ENCODE measurements at regions of chr12 and their contacts with region 1.

Region 1: DNA sequence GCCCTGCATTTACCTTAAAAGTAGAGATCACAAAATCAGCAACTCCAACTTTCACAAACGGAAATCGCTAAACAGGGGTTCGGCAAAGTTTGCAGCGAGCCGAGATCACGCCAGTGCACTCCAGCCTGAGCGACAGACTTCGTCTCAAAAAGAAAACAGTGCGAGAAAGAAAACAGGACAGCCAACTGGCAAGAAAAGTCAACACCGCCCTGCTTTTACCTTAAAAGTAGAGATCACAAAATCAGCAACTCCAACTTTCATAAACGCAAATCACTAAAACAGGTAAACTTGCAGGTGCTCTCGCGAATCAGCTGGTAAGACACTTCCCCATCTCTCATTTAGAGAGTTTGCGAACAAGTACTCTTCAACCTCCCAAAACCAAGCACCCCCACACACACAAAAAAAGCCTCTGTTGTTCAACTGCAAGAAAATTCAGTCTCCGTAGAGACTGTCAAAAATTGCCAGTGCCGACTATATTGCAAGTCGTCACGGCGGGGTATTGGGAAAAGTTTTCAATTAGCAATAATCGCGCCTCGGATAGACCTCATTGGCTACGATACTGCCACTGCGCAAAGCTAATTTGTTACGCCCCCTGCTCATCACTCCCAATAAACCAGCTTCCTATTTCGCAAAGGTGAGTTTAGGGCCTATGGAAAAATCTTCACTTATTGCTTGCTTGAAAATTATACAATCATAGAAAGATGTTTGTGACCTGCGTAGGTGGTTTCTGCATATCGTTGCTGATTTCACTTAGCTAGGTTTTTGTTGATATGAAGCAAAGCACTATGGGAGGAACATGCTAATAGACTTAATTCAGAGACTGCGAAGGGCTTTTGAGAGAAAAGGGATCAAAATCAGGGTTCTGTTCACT is at the start of gene RNU4-1:
- DNase-seq: peak; percentile 99
- ATAC-seq: peak; percentile 60
- H3K4me3 ChIP-seq: peak within 1 kb of the TSS; percentile 47 to 56
- H3K27ac ChIP-seq: peak within 1 kb of the TSS; percentile 84
- H3K4me1 ChIP-seq: peaks cover 10 to 36% of the 10 kb centered on the region in 2 experiments
- H3K27me3 ChIP-seq: no peaks in the 10 kb centered on the region
- CTCF ChIP-seq: 0 out of 6 replicates have a peak, but pooled peaks of 1 of the 3 experiments have one; percentile 6
- POLR2A ChIP-seq: peak; percentile 100
- RAD21 ChIP-seq: 0 out of 2 replicates have a peak, but pooled peaks have one; percentile 24
- total RNA-seq, gene RNU4-1: 2,323 TPM

Region 2: GRCh38 chr12:120228291-120229070 is 64.4 kb before region 1 on chr12:
- CTCF ChIA-PET with region 1: interaction called, 26 read pairs
- POLR2A ChIA-PET with region 1: interaction called, 394 read pairs
- RAD21 ChIA-PET with region 1: interaction called, 5 to 10 read pairs
- intact Hi-C with region 1: loop called (anchors 1 kb)
- DNase-seq: no peak
- ATAC-seq: peak; percentile 52
- H3K4me3 ChIP-seq: peak overlapping the region; percentile 19 to 58
- H3K27ac ChIP-seq: peak overlapping the region; percentile 100
- H3K4me1 ChIP-seq: peaks cover 55 to 85% of the 10 kb centered on the region in 2 experiments
- H3K27me3 ChIP-seq: no peaks in the 10 kb centered on the region
- CTCF ChIP-seq: peak in 2 of 3 experiments; percentile 89; a peak in 4 of 6 replicates
- POLR2A ChIP-seq: no peak
- RAD21 ChIP-seq: no peak

Region 3: DNA sequence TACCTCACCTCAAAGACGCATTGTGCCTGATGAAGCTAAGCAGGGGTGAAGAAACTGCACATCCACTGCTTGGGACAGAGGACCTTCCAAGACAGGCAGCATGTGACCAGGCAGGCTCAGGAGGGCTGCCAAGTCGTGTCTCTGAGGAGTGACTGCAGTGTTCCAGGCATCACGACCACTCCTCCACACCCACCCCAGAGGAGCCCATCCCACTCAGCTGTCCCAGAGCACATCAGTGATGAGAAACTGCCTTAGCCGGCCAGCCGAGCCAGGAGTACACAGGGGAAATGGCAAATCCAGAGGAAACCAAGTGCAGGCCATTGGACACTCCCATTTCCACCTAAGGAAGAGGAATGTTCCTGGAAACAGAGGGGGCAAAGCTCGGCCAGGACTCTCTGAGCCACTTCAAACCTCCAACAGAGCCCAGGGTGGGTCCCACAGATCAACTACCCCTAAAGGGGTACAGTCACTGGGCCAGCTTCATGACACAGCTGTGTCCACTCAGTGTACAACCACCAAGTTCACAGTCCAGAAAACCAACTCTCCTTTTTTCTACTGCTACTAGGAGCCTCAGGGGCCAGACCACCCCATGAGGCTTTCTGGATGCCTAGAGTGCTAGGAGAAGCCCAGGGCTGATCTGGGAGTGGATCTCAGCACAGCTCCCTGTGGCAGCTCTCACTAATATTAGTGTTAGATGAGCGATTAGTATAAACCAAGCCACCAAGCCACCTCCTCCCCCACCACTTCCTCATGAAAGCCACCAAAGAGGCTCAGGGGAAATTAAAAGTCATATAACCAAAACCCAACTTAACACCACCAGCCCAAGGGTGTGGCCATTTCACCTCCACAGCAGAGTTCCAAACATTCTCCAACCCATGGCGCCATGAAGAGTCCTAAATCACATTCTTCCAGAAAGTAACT is 42.8 kb before region 1 on chr12:
- CTCF ChIA-PET with region 1: no interaction called
- POLR2A ChIA-PET with region 1: interaction called, 16 read pairs
- RAD21 ChIA-PET with region 1: no interaction called
- intact Hi-C with region 1: no loop called
- DNase-seq: no peak
- ATAC-seq: no peak
- H3K4me3 ChIP-seq: no peak overlapping the region
- H3K27ac ChIP-seq: peak overlapping the region; percentile 72
- H3K4me1 ChIP-seq: peaks cover 53 to 84% of the 10 kb centered on the region in 2 experiments
- H3K27me3 ChIP-seq: no peaks in the 10 kb centered on the region
- CTCF ChIP-seq: no peak
- POLR2A ChIP-seq: no peak
- RAD21 ChIP-seq: no peak

Region 4: GRCh38 chr12:120276734-120277133 is 16.2 kb before region 1 on chr12:
- CTCF ChIA-PET with region 1: no interaction called
- POLR2A ChIA-PET with region 1: interaction called, 29 read pairs
- RAD21 ChIA-PET with region 1: interaction called in 1 of 2 experiments, 3 read pairs
- intact Hi-C with region 1: loop called (anchors 2 kb)
- DNase-seq: no peak
- ATAC-seq: no peak
- H3K4me3 ChIP-seq: no peak overlapping the region
- H3K27ac ChIP-seq: no peak overlapping the region
- H3K4me1 ChIP-seq: no peaks in the 10 kb centered on the region
- H3K27me3 ChIP-seq: no peaks in the 10 kb centered on the region
- CTCF ChIP-seq: no peak
- POLR2A ChIP-seq: no peak
- RAD21 ChIP-seq: no peak

Region 5: DNA sequence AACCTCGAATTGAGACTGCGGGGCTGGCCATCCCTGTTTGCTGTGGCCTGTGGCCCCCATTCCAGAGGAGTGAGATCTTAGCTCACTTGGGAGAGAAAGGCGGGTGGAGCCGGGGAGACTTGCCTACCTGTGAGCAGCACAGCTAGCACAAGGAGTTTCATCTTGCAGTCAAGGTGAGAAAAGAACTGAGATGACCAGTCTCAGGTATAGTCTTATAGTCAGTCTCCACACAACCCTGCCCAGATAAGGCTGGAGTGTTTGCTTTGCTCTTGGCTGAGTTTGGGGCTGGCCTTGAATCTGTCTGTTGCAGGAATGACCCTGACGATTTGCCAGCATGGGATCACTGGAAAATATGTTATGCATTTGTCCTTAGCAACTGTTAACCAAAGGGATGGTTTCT is 34.7 kb after region 1 on chr12 and contains the start of gene PLA2G1B:
- CTCF ChIA-PET with region 1: no interaction called
- POLR2A ChIA-PET with region 1: interaction called, 10 read pairs
- RAD21 ChIA-PET with region 1: no interaction called
- intact Hi-C with region 1: no loop called
- DNase-seq: no peak
- ATAC-seq: no peak
- H3K4me3 ChIP-seq: no peak within 1 kb of the TSS
- H3K27ac ChIP-seq: no peak within 1 kb of the TSS
- H3K4me1 ChIP-seq: peaks cover 0 to 8% of the 10 kb centered on the region in 2 experiments; a peak in 1 of 4 replicates
- H3K27me3 ChIP-seq: no peaks in the 10 kb centered on the region
- CTCF ChIP-seq: no peak
- POLR2A ChIP-seq: no peak
- RAD21 ChIP-seq: no peak
- total RNA-seq, gene PLA2G1B: 2.0 TPM

Measured in HCT116 (cell line).